ENCODE measurements at regions of chr10 and their contacts with region 1.

Region 1: GRCh38 chr10:70146489-70147258 is at the start of gene TYSND1:
- DNase-seq: peak; percentile 92 to 98 (median 93)
- H3K4me3 ChIP-seq: peak within 1 kb of the TSS; percentile 68 to 81 (median 77)
- H3K4me3 Mint-ChIP-seq: peak within 1 kb of the TSS; percentile 86 to 92
- H3K27ac ChIP-seq: peak within 1 kb of the TSS; percentile 66 to 84
- H3K27ac Mint-ChIP-seq: peak within 1 kb of the TSS; percentile 86 to 97 (median 95)
- H3K4me1 ChIP-seq: peaks cover 15 to 29% of the 10 kb centered on the region in 2 donors
- H3K4me1 Mint-ChIP-seq: peaks cover 17% of the 10 kb centered on the region
- H3K27me3 ChIP-seq: no peaks in the 10 kb centered on the region
- H3K27me3 Mint-ChIP-seq: peaks cover 0 to 3% (median 1%) of the 10 kb centered on the region in 3 donors
- CTCF ChIP-seq: peak; percentile 70
- polyA plus RNA-seq, gene TYSND1: 8.6 to 11.2 (median 11.2) TPM

Region 2: GRCh38 chr10:70169649-70170364 is 23.1 kb after region 1 on chr10:
- intact Hi-C with region 1: loop called in 1 of 2 experiments (anchors 2 kb)
- DNase-seq: peak in 2 of 3 donors; percentile 25 to 45
- H3K4me3 ChIP-seq: peak overlapping the region; percentile 84 to 98 (median 96)
- H3K4me3 Mint-ChIP-seq: peak overlapping the region; percentile 92 to 94
- H3K27ac ChIP-seq: peak overlapping the region; percentile 88 to 95
- H3K27ac Mint-ChIP-seq: peak overlapping the region; percentile 94 to 98 (median 97)
- H3K4me1 ChIP-seq: peaks cover 36 to 53% of the 10 kb centered on the region in 2 donors
- H3K4me1 Mint-ChIP-seq: peaks cover 45% of the 10 kb centered on the region
- H3K27me3 ChIP-seq: no peaks in the 10 kb centered on the region
- H3K27me3 Mint-ChIP-seq: peaks cover 0 to 2% (median 0%) of the 10 kb centered on the region in 3 donors
- CTCF ChIP-seq: no peak

Region 3: GRCh38 chr10:70404036-70404786 is 257.5 kb after region 1 on chr10 and contains the start of gene EIF4EBP2:
- intact Hi-C with region 1: loop called in 1 of 2 experiments (anchors 10 kb)
- DNase-seq: peak; percentile 94 to 96 (median 95)
- H3K4me3 ChIP-seq: peak within 1 kb of the TSS; percentile 62 to 85 (median 85)
- H3K4me3 Mint-ChIP-seq: peak within 1 kb of the TSS; percentile 95 to 99
- H3K27ac ChIP-seq: peak within 1 kb of the TSS; percentile 62 to 93
- H3K27ac Mint-ChIP-seq: peak within 1 kb of the TSS; percentile 95 to 99 (median 97)
- H3K4me1 ChIP-seq: peaks cover 18 to 30% of the 10 kb centered on the region in 2 donors
- H3K4me1 Mint-ChIP-seq: peaks cover 38% of the 10 kb centered on the region
- H3K27me3 ChIP-seq: no peaks in the 10 kb centered on the region
- H3K27me3 Mint-ChIP-seq: peaks cover 0 to 1% (median 0%) of the 10 kb centered on the region in 3 donors
- CTCF ChIP-seq: no peak
- polyA plus RNA-seq, gene EIF4EBP2: 26.3 to 93.8 (median 73.4) TPM

Region 4: DNA sequence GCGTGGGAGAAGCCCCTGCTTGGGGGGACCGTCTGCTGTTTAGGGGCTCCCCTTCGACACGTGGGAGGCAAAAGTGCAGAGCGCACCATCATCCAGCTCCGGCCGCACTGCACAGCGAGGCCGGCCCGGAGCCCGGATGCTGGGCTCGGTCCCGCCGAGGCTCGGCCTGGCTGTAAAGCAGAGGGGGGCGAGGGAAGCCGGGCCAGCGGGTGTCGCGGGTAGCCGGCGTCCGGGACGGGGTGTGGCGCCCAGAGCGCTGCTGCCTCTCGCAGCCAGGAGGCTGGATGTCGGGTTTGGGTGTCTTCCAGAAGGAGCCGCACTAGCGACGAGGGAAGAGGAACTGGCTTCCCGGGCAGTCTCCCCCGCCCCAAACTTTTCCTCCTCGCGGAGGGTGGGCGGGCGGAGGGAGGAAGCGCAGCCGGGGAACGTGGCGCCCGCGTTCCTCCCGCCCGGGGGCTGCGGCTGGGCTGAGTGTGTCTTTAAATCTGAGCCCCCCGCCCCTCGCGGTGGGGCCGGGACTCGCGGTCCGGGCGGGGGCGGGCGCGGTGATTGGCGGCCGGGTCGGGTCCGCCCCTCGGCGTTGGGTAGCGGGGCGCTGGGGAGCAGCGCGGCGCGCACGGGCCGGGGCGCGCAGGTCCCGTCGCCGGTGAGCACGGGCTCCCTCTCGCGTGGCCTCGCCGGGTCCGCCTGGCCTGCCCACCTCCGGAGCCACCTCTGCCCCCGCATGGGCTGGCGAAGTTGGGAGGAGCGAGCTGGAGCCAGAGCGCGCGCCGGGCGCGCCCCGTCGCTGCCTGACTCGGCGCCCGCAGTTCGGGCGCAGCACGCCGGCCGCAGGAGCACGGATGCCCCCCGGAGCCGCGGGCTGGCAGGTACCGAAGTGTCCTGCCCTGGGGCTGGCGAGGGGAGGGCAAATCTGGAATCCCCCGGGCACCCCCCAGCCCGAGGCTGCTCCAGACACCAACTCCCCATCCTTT is 331.8 kb after region 1 on chr10 and contains the start of gene PALD1:
- intact Hi-C with region 1: no loop called
- DNase-seq: peak in 2 of 3 donors; percentile 36 to 37
- H3K4me3 ChIP-seq: peak within 1 kb of the TSS; percentile 32 to 74 (median 33)
- H3K4me3 Mint-ChIP-seq: peak within 1 kb of the TSS; percentile 74 to 82
- H3K27ac ChIP-seq: no peak within 1 kb of the TSS
- H3K27ac Mint-ChIP-seq: no peak within 1 kb of the TSS
- H3K4me1 ChIP-seq: peaks cover 11 to 30% of the 10 kb centered on the region in 2 donors
- H3K4me1 Mint-ChIP-seq: peaks cover 24% of the 10 kb centered on the region
- H3K27me3 ChIP-seq: peaks cover 19 to 40% of the 10 kb centered on the region in 2 donors
- H3K27me3 Mint-ChIP-seq: peaks cover 32 to 55% (median 37%) of the 10 kb centered on the region in 3 donors
- CTCF ChIP-seq: no peak
- polyA plus RNA-seq, gene PALD1: 0.04 to 0.11 TPM in 2 of 3 donors, not detected in the other